ENCODE measurements at regions of chr6 and their contacts with region 1.

Region 1: DNA sequence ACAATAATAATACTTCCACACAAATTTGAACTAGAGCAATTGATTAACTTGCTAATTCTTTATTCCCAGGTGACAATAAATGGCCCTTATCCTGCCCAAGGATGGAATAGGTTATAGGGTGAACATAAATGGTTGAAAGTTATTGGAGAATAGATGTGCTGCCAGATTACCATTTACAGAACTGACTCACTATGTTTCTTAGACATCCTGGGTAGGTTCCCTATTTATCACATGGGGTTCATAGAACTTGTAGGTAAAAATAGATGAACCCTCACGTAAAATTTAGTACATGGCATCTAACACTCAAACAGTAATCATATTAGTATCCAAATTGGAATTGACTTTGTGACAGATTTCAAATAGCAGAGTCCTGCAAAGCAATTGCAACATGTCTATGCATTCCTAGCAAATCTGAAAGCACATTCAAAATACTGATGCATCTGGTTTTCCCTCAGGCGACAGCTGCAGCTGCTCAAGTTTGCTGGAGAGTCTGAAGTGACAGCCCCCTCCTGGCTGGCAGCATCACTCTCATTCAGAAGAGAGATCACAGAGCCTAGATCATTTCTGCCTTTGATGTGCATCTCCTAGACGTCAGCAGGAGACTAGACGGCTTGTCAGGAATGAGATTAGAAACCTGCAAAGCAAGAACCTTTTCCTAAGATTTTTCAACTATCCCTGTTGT is 80.2 kb upstream of the RNF217 start:
- DNase-seq: no peak

Region 2: GRCh38 chr6:125099211-125100073 is 217.4 kb after region 1 on chr6:
- in situ Hi-C with region 1: loop called (anchors 25 kb)
- DNase-seq: peak; percentile 76